Activated CD4-positive, alpha-beta memory T cell treated with anti-CD3 and anti-CD28 coated beads for 36 hours (primary cell): ENCODE measurements at regions of chr18 and their contacts with region 1.

Region 1: DNA sequence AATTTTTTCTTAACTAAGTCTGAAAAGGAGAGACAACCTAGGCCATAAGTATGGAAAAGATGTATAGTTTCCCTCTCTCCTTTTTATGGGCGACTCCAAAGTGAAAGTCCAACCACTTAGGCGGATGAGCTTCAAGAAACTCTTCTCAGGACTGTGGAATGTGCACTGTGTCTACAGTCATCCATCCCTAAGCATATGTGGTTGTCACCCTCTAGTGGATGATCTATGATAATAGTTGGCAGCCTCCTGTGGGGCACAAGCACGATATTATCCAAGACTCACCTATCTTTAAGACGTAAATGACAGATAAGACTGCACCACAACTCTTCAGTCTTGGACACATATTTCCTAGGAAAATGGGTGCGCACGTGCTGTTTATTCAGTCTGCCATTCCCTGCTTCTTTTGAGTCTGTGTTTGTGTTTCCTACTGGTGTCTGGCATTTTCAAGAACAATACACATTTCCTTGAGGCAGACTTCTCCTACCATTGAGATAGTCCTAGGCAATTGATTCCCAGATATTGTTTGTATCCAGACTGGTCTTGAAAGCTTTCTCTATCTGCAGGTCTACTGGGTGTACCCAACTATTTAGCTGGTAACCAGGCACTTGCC is 145.5 kb upstream of the CTAGE1 start:
- DNase-seq: no peak
- H3K4me3 Mint-ChIP-seq: no peak overlapping the region
- H3K27ac Mint-ChIP-seq: no peak overlapping the region
- H3K4me1 Mint-ChIP-seq: peaks cover 5% of the 10 kb centered on the region
- H3K27me3 Mint-ChIP-seq: peaks cover 29% of the 10 kb centered on the region

Region 2: GRCh38 chr18:21831413-21831831 is 731.8 kb before region 1 on chr18:
- CTCF ChIA-PET with region 1: no interaction called
- POLR2A ChIA-PET with region 1: no interaction called
- intact Hi-C with region 1: no loop called
- DNase-seq: no peak
- H3K4me3 Mint-ChIP-seq: no peak overlapping the region
- H3K27ac Mint-ChIP-seq: no peak overlapping the region
- H3K4me1 Mint-ChIP-seq: peaks cover 2% of the 10 kb centered on the region
- H3K27me3 Mint-ChIP-seq: no peaks in the 10 kb centered on the region

Region 3: DNA sequence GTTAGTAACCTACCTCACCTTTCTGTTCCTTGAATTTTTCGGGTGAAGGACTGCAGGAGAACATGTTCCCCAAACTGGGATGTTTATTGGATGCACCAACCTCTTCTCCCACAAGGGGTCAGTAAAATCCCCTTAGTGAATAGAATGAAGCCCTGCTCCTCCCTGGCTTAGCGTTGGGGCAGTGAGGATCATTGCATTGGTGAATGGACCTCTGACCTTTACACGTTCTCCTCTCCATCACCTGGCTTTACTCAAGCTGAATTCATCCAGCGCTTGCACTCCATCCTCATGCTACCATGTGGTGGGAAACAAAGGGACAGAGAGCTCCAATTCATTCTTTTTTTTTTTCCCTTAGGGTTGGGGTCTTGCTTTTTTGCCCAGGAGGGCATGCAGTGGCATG is 665.4 kb before region 1 on chr18:
- CTCF ChIA-PET with region 1: no interaction called
- POLR2A ChIA-PET with region 1: no interaction called
- intact Hi-C with region 1: loop called (anchors 5 kb)
- DNase-seq: peak; percentile 19
- H3K4me3 Mint-ChIP-seq: no peak overlapping the region
- H3K27ac Mint-ChIP-seq: no peak overlapping the region
- H3K4me1 Mint-ChIP-seq: peaks cover 3% of the 10 kb centered on the region
- H3K27me3 Mint-ChIP-seq: peaks cover 14% of the 10 kb centered on the region

Region 4: GRCh38 chr18:21997207-21998143 is 565.7 kb before region 1 on chr18:
- CTCF ChIA-PET with region 1: no interaction called
- POLR2A ChIA-PET with region 1: no interaction called
- intact Hi-C with region 1: loop called (anchors 5 kb)
- DNase-seq: no peak
- H3K4me3 Mint-ChIP-seq: no peak overlapping the region
- H3K27ac Mint-ChIP-seq: no peak overlapping the region
- H3K4me1 Mint-ChIP-seq: peaks cover 4% of the 10 kb centered on the region
- H3K27me3 Mint-ChIP-seq: no peaks in the 10 kb centered on the region

Region 5: GRCh38 chr18:22169007-22169864 is 394.0 kb before region 1 on chr18 and contains the start of gene GATA6:
- CTCF ChIA-PET with region 1: interaction called, 4 read pairs
- POLR2A ChIA-PET with region 1: no interaction called
- intact Hi-C with region 1: loop called (anchors 2 kb)
- DNase-seq: peak; percentile 53
- H3K4me3 Mint-ChIP-seq: peak within 1 kb of the TSS; percentile 71
- H3K27ac Mint-ChIP-seq: no peak within 1 kb of the TSS
- H3K4me1 Mint-ChIP-seq: peaks cover 31% of the 10 kb centered on the region
- H3K27me3 Mint-ChIP-seq: peaks cover 71% of the 10 kb centered on the region
- total RNA-seq, gene GATA6: 0.07 to 0.10 TPM

Region 6: DNA sequence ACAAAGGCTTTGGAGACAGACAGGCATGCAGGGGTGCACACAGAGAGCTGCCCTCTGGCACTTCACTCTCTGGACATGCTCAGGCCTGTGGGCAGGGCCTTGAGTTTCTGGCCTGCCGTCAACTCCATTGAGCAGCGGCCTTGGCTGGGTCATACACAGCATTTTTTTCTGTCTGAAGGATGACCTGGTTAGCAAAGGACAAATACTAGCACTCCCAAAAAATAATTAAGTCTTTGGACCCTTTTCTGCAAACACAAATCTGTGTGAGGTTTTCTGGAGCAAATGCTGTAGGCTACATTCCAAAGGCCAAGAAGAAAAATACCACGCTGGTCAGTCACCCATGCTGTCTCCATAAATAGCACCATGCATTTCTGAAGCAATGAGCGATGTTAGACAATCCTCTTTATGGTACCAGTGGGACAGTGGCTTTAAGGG is 20.8 kb before region 1 on chr18:
- CTCF ChIA-PET with region 1: no interaction called
- POLR2A ChIA-PET with region 1: no interaction called
- intact Hi-C with region 1: no loop called
- DNase-seq: no peak
- H3K4me3 Mint-ChIP-seq: no peak overlapping the region
- H3K27ac Mint-ChIP-seq: no peak overlapping the region
- H3K4me1 Mint-ChIP-seq: no peaks in the 10 kb centered on the region
- H3K27me3 Mint-ChIP-seq: no peaks in the 10 kb centered on the region

Region 7: DNA sequence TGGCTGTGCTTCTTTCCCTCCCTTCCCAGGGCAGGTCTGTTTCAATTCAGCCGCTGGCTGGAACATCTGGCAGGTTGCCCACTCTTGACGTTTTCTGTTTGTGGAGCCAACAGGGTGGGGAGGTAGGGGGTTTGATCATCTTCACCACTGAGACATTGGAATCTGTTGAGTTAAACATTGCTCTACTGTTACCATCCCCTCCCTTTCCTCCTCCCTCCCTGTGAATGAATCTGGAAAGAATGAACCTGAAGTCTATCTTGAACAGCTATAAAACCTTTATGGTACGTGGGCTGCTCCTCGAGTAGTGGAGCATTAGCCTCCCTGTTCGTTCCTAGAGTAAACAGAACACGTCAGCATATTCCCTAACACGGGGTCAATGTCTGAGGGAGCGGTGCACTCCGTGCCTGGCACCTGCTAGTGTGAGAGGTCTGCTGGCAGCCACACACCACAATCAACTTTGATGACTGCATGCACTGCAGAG is 120.0 kb after region 1 on chr18:
- CTCF ChIA-PET with region 1: no interaction called
- POLR2A ChIA-PET with region 1: no interaction called
- intact Hi-C with region 1: no loop called
- DNase-seq: no peak
- H3K4me3 Mint-ChIP-seq: no peak overlapping the region
- H3K27ac Mint-ChIP-seq: no peak overlapping the region
- H3K4me1 Mint-ChIP-seq: no peaks in the 10 kb centered on the region
- H3K27me3 Mint-ChIP-seq: peaks cover 3% of the 10 kb centered on the region